Heart left ventricle (tissue), 16 donors: ENCODE measurements at regions of chr2 and their contacts with region 1.

Region 1: DNA sequence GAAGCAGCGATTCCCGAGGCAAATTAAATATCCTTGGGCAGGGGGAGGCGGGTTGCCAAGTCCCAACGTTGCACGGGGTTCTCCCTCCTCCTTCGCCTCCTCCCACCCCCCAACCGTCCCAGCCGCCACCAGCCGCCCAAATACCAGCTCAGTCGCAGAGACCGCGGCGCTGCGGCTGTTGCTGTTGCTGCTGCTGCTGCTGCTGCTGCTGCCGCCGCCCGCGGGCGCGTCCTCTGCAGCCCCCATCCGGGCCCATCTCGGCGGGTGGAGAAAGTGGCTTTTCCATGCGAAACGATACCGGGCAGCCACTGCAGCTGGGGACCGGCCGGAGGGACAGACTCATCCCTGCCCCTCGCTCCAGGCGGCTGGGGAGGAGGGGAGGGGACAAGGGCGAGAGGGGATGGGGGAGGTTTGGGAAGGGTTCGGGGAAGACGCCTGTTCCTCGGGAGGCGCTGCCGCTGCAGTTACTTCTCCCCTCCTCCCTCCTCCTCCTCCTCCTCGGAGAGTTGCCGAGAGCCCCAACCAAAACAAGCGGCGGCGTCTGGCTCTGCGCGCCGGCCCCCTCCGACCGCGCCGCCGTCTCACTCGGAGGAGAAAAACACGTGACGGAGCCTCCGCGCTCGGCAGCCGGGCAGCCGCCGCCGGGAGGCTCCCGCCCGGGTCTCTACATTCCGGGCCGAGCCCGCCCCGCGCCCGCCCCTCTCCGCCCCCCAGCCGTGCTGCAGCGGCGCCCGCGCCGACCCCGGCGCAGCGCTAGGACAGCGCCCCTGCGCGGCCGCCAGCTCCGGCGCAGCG is at the start of gene IRS1:
- DNase-seq: peak; percentile 74 to 89 (median 81)
- ATAC-seq: peak in 3 of 4 donors; percentile 28 to 66 (median 54)
- H3K4me3 ChIP-seq: peak within 1 kb of the TSS; percentile 45 to 97 (median 82)
- H3K27ac ChIP-seq: peak within 1 kb of the TSS; percentile 69 to 98 (median 94)
- H3K4me1 ChIP-seq: peaks cover 0 to 63% (median 36%) of the 10 kb centered on the region in 12 donors
- H3K27me3 ChIP-seq: peaks cover 0 to 31% (median 0%) of the 10 kb centered on the region in 9 donors
- CTCF ChIP-seq: peak in 7 of 12 donors; percentile 25 to 68 (median 39)
- POLR2A ChIP-seq: peak in 1 of 2 donors; percentile 53
- total RNA-seq, gene IRS1: 13.4 to 45.8 (median 16.8) TPM

Region 2: DNA sequence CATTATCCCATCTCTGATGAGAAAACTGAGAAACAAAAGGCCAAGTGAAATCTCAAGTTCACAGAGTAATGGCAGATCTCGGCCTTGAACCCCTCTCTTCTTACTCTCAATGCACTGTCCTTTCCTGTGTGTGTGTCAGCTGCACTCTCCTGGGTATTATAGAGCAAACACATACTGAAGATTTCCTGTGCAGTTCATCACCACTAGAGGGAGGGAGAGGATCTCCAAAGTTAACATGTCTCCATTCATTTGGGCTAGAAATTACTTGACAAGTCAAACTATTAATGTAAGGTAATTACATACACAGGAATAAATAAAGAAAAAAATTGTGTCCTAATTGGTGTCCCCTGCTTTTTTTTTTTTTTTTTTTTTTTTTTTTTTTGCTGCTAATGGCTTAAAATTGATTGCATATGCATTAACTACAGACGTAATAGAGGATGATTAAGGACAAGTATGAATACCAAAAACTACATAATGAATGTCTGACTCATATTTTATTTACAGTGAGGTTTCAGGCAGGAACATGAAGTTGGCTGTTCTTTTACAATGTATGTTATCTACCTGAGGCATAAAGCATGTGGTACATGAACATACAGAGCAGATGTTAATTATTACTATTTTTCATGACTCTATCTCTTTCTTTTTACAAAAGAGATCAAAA is 1130.6 kb before region 1 on chr2:
- intact Hi-C with region 1: loop called in 8 of 10 experiments (anchors 2 to 5 kb)
- DNase-seq: peak in 1 of 5 donors; percentile 10
- ATAC-seq: peak in 3 of 4 donors; percentile 63 to 69 (median 67)
- H3K4me3 ChIP-seq: no peak overlapping the region
- H3K27ac ChIP-seq: no peak overlapping the region
- H3K4me1 ChIP-seq: no peaks in the 10 kb centered on the region
- H3K27me3 ChIP-seq: peaks cover 0 to 15% (median 0%) of the 10 kb centered on the region in 9 donors
- CTCF ChIP-seq: peak; percentile 43 to 76 (median 58)
- POLR2A ChIP-seq: no peak

Region 3: GRCh38 chr2:226124548-226125011 is 674.8 kb before region 1 on chr2:
- intact Hi-C with region 1: loop called in 1 of 10 experiments (anchors 5 kb)
- DNase-seq: peak in 1 of 5 donors; percentile 23
- ATAC-seq: peak in 1 of 4 donors; percentile 51
- H3K4me3 ChIP-seq: no peak overlapping the region
- H3K27ac ChIP-seq: peak overlapping the region in 3 of 12 donors; percentile 3 to 23 (median 15)
- H3K4me1 ChIP-seq: peaks cover 0 to 37% (median 1%) of the 10 kb centered on the region in 12 donors
- H3K27me3 ChIP-seq: no peaks in the 10 kb centered on the region
- CTCF ChIP-seq: no peak
- POLR2A ChIP-seq: no peak

Region 4: GRCh38 chr2:226447338-226448295 is 351.8 kb before region 1 on chr2:
- intact Hi-C with region 1: loop called in 6 of 10 experiments (anchors 5 to 10 kb)
- DNase-seq: no peak
- ATAC-seq: peak in 1 of 4 donors; percentile 19
- H3K4me3 ChIP-seq: no peak overlapping the region
- H3K27ac ChIP-seq: peak overlapping the region in 5 of 12 donors; percentile 17 to 61 (median 54)
- H3K4me1 ChIP-seq: peaks cover 0 to 33% (median 10%) of the 10 kb centered on the region in 12 donors
- H3K27me3 ChIP-seq: no peaks in the 10 kb centered on the region
- CTCF ChIP-seq: no peak
- POLR2A ChIP-seq: no peak

Region 5: DNA sequence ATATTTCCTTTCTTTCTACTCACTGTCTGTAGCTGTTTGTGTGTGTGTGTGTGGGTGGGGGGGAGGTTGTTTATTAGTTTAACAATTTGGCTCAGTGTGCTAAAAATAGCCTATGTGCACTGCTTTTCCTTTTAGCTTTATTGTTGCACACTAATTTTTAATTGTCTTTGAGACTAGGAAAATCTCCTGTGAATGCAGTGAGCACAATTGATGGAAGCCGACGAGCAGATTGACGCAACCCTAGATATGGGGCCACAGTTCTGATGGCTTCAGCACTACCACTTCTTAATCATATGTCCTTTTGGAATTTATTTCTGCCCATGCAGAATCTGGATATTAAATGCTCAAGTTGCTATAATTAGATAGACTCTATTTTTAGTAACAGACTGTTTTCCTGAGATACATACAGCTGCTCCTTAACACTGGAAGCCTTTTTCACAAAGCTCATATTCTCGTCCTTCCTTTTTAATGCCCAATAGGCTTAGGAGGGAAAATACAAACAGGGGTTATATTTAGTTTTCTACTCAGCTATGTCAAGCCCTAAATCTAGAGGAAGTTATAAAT is 108.8 kb before region 1 on chr2:
- intact Hi-C with region 1: loop called in 4 of 10 experiments (anchors 5 to 10 kb)
- DNase-seq: peak in 3 of 5 donors; percentile 37 to 43 (median 39)
- ATAC-seq: peak; percentile 56 to 84 (median 80)
- H3K4me3 ChIP-seq: peak overlapping the region in 6 of 12 donors; percentile 1 to 31 (median 15)
- H3K27ac ChIP-seq: peak overlapping the region in 11 of 12 donors; percentile 11 to 72 (median 69)
- H3K4me1 ChIP-seq: peaks cover 0 to 47% (median 33%) of the 10 kb centered on the region in 12 donors
- H3K27me3 ChIP-seq: no peaks in the 10 kb centered on the region
- CTCF ChIP-seq: no peak
- POLR2A ChIP-seq: no peak

Region 6: GRCh38 chr2:226835796-226836547 is 36.6 kb after region 1 on chr2 and contains the start of gene RHBDD1:
- intact Hi-C with region 1: loop called in 1 of 10 experiments (anchors 5 kb)
- DNase-seq: peak; percentile 95 to 97 (median 96)
- ATAC-seq: peak; percentile 100
- H3K4me3 ChIP-seq: peak within 1 kb of the TSS; percentile 74 to 94 (median 85)
- H3K27ac ChIP-seq: peak within 1 kb of the TSS; percentile 92 to 99 (median 98)
- H3K4me1 ChIP-seq: peaks cover 0 to 32% (median 20%) of the 10 kb centered on the region in 12 donors
- H3K27me3 ChIP-seq: no peaks in the 10 kb centered on the region
- CTCF ChIP-seq: no peak
- POLR2A ChIP-seq: peak; percentile 49 to 90
- total RNA-seq, gene RHBDD1: 12.5 to 44.5 (median 33.2) TPM